HepG2 (cell line): ENCODE measurements at regions of chr16 and their contacts with region 1.

Region 1: DNA sequence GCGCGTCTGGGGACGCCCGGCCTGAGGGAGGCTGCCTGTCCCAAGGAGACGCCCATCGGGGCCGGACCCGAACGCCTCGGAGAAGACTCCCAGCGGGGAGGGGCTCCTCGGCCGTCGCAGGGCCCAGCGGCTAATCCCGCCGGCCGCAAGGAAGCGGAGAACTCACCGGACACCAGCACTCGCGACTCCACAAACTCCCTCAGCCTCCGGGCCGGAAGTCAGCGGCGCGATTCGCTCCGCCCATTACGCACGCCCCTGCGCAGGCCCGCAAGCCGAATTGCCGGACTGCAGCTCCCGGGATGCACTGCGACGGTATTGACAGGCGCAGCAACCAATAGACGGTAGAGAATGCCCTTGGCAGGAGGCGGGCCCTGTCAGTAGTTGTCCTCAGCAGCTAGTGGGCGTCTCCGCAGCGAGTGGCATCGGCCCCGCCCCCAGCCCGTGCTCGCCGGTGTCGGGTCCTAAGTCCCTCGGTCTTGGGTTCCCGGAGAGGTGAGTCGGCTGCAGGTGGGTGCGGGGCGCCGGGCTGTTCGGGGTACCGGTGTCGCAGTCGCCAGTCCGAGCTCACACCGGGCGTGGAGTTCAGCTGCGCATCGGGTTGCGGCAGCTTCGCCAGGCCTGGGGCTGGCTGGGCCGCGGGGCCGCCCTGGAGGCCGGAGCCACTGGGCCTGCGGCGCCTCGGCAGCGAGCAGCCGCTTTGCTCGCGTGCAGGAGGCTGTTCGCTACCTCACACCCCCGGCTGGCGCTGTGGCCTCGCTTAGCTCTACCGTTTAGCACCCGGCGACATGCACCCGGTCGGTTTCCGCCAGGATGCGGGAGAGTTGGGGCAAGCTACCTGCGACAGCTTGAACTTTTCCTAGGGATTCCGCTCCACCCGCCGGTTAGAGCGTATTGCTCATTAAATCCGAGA is at the starts of genes ZNF174 and ZSCAN32:
- DNase-seq: peak; percentile 98
- ATAC-seq: peak; percentile 96
- H3K4me3 ChIP-seq: peak within 1 kb of the TSS; percentile 90 to 94 (median 94)
- H3K27ac ChIP-seq: peak within 1 kb of the TSS; percentile 86
- H3K4me1 ChIP-seq: peaks cover 29% of the 10 kb centered on the region
- H3K27me3 ChIP-seq: no peaks in the 10 kb centered on the region; a peak in 1 of 5 replicates
- CTCF ChIP-seq: peak; percentile 18; the same call in 1 of the 2 replicates
- EP300 ChIP-seq: 0 out of 4 replicates have a peak, but pooled peaks of 1 of the 2 experiments have one; percentile 15
- POLR2A ChIP-seq: peak; percentile 81 to 92
- RAD21 ChIP-seq: peak; percentile 50
- total RNA-seq, gene ZNF174: 10.0 and 10.6 TPM in 2 replicates
- total RNA-seq, gene ZSCAN32: 10.7 and 11.7 TPM in 2 replicates

Region 2: DNA sequence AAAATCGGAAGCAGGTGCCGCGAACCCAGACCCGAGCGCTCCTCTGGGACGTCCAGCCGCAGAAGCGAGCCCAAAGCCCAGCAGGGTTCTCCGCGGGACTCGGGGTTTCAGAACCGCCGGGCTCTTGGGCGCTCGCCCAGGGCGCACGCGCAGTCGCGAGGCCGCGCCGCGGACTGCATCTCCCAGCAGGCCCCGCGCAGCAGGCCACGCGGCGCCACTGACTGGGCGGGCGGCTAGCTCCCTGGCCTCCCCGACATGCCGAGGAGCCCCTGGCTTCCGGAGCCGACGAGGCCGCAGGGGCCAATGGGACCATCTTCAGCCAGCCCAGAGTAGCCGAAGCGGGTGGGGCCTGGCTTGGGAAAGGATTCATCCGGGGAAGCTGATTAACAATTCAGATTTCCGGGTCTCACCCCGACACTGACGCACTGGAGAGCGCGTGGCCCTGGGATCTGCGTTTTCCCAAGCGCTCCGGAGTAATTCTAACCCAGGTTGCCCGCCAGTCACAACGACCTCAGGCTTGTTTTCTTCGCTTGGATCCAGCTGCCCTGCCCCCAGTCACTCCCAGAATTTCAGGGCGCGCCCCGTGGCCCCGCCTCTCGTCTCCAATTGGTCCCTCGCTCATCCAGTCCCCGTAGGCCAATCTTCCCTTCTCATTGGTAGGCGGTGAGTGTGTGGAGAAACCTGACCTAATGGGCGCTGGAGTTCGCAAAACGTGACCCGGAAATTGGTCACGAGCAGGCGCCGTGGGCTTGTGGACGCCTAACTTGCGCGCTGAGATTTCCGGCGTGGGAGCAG is 118.1 kb before region 1 on chr16 and contains the start of gene ZNF263:
- CTCF ChIA-PET with region 1: no interaction called
- POLR2A ChIA-PET with region 1: interaction called, 26 read pairs
- in situ Hi-C with region 1: no loop called
- intact Hi-C with region 1: loop called (anchors 1 kb)
- DNase-seq: peak; percentile 97
- ATAC-seq: peak; percentile 93
- H3K4me3 ChIP-seq: peak within 1 kb of the TSS; percentile 79 to 100 (median 99)
- H3K27ac ChIP-seq: peak within 1 kb of the TSS; percentile 99
- H3K4me1 ChIP-seq: peaks cover 45% of the 10 kb centered on the region
- H3K27me3 ChIP-seq: no peaks in the 10 kb centered on the region; a peak in 1 of 5 replicates
- CTCF ChIP-seq: peak; percentile 16; the same call in 1 of the 2 replicates
- EP300 ChIP-seq: peak in 1 of 2 experiments; percentile 29; a peak in 1 of 4 replicates
- POLR2A ChIP-seq: peak; percentile 68 to 89
- RAD21 ChIP-seq: peak; percentile 28
- total RNA-seq, gene ZNF263: 40.3 and 41.2 TPM in 2 replicates

Region 3: GRCh38 chr16:3364774-3365427 is 36.1 kb before region 1 on chr16:
- CTCF ChIA-PET with region 1: no interaction called
- POLR2A ChIA-PET with region 1: interaction called, 17 read pairs
- in situ Hi-C with region 1: no loop called
- intact Hi-C with region 1: no loop called
- DNase-seq: peak; percentile 94
- ATAC-seq: peak; percentile 87
- H3K4me3 ChIP-seq: peak overlapping the region; percentile 74 to 79 (median 75); a peak in 5 of 6 replicates
- H3K27ac ChIP-seq: peak overlapping the region; percentile 93
- H3K4me1 ChIP-seq: peaks cover 20% of the 10 kb centered on the region
- H3K27me3 ChIP-seq: peaks cover 0 to 13% of the 10 kb centered on the region in 2 experiments; a peak in 2 of 5 replicates
- CTCF ChIP-seq: no peak
- EP300 ChIP-seq: no peak
- POLR2A ChIP-seq: peak; percentile 65 to 84
- RAD21 ChIP-seq: no peak

Region 4: GRCh38 chr16:3383045-3383448 is 18.0 kb before region 1 on chr16:
- CTCF ChIA-PET with region 1: no interaction called
- POLR2A ChIA-PET with region 1: no interaction called
- in situ Hi-C with region 1: no loop called
- intact Hi-C with region 1: no loop called
- DNase-seq: no peak
- ATAC-seq: no peak
- H3K4me3 ChIP-seq: no peak overlapping the region
- H3K27ac ChIP-seq: no peak overlapping the region
- H3K4me1 ChIP-seq: peaks cover 3% of the 10 kb centered on the region; the same call in 1 of the 2 replicates
- H3K27me3 ChIP-seq: no peaks in the 10 kb centered on the region
- CTCF ChIP-seq: no peak
- EP300 ChIP-seq: no peak
- POLR2A ChIP-seq: no peak
- RAD21 ChIP-seq: no peak

Region 5: DNA sequence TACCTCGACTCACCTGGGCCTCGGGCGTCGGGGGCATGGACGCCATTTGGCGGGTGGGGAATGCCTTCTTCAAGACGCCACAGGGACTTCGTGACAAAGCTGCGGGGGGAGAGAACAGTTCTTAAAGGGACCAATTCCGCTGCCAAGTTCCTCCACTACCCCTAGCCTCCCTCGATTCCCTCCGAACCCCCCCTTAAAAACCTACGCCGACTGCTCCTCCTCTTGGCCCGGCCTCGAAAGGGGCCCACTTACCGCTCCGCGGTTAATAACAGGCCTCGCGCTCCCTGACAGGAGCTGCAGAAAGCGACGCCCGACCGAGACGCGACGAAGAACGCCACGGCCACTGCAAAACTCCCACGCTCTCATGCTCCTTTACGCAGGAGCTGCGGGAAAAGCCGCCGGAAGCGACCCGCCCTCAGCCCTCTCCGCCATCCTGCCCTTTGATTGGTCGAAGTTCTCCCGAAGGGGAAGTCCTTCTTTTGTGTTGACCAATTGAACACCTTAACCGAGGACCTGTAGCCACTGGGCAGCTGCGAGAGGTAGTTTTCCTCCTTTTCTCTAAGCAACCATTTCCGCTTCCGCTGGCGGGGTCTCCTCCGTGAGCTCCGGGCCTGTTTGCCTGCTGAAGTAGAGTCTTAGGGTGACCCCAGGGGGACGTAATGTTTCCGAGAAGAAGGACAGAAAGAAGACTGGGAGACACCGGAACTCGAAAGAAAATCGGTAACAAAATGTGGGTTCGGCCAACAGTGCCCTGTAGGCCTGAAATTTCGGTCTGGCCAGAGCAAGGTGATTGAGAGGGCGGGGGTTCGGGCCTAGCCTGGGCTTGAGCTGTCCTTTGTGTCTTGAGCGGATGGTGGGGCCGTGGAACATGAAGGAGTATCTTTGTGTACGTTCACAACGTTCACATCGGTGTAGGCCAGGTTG is 42.3 kb after region 1 on chr16 and contains the starts of genes NAA60 and ZNF597:
- CTCF ChIA-PET with region 1: no interaction called
- POLR2A ChIA-PET with region 1: interaction called, 33 read pairs
- in situ Hi-C with region 1: no loop called
- intact Hi-C with region 1: loop called (anchors 5 kb)
- DNase-seq: peak; percentile 93
- ATAC-seq: peak; percentile 94
- H3K4me3 ChIP-seq: peak within 1 kb of the TSS; percentile 66 to 76 (median 75)
- H3K27ac ChIP-seq: peak within 1 kb of the TSS; percentile 78
- H3K4me1 ChIP-seq: peaks cover 66% of the 10 kb centered on the region
- H3K27me3 ChIP-seq: no peaks in the 10 kb centered on the region; a peak in 1 of 5 replicates
- CTCF ChIP-seq: peak; percentile 2; the same call in 1 of the 2 replicates
- EP300 ChIP-seq: no peak
- POLR2A ChIP-seq: peak; percentile 42 to 69
- RAD21 ChIP-seq: no peak
- total RNA-seq, gene NAA60: 14.7 and 16.9 TPM in 2 replicates
- total RNA-seq, gene ZNF597: 2.4 and 3.8 TPM in 2 replicates

Region 6: DNA sequence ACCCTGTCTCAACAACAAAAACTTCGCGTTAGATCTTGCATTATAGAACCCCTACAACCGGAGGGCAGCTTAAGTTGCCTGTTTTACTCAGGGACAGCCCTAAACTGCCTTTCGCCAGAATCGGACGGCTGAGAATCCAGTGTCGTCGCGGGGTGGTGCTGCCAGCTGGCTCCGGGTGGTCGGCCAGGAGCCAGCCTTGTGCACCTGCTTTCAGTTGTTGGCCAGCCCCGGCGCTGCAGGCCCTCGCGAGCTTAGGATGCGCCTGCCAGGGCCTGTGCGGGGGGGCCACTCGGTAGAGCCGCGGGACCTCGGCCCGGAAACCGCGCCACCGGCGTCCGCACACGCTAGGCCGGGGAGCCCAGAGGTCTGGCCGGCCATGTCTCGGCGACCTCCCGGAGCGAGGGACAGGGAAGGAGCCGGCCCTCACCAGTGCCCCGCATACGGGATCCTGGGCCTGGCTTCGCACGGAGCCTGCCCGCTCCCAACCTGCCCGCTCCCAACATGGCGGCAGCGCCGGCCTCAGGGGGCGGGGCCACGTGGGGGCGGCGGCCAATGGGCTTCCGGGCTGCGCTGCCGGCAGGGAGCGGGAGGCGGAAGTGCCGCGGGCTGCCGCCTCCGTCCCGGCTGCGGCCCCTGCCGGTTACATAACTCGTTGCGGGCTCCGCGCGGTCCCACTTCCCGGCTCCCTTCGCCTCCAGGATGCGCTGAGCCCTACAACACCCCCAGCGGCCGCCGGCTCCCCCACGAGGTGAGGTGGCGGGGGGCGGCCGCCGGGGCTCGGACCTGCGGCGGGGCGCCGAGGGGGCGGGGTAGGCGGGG is 56.6 kb after region 1 on chr16:
- CTCF ChIA-PET with region 1: no interaction called
- POLR2A ChIA-PET with region 1: interaction called, 16 read pairs
- in situ Hi-C with region 1: no loop called
- intact Hi-C with region 1: loop called (anchors 1 kb)
- DNase-seq: peak; percentile 78
- ATAC-seq: peak; percentile 83
- H3K4me3 ChIP-seq: peak overlapping the region; percentile 74 to 93 (median 92)
- H3K27ac ChIP-seq: peak overlapping the region; percentile 91
- H3K4me1 ChIP-seq: peaks cover 70% of the 10 kb centered on the region
- H3K27me3 ChIP-seq: no peaks in the 10 kb centered on the region; a peak in 1 of 5 replicates
- CTCF ChIP-seq: peak; percentile 41; the same call in 1 of the 2 replicates
- EP300 ChIP-seq: 0 out of 4 replicates have a peak, but pooled peaks of 1 of the 2 experiments have one; percentile 9
- POLR2A ChIP-seq: peak; percentile 89 to 92
- RAD21 ChIP-seq: peak; percentile 66

Region 7: DNA sequence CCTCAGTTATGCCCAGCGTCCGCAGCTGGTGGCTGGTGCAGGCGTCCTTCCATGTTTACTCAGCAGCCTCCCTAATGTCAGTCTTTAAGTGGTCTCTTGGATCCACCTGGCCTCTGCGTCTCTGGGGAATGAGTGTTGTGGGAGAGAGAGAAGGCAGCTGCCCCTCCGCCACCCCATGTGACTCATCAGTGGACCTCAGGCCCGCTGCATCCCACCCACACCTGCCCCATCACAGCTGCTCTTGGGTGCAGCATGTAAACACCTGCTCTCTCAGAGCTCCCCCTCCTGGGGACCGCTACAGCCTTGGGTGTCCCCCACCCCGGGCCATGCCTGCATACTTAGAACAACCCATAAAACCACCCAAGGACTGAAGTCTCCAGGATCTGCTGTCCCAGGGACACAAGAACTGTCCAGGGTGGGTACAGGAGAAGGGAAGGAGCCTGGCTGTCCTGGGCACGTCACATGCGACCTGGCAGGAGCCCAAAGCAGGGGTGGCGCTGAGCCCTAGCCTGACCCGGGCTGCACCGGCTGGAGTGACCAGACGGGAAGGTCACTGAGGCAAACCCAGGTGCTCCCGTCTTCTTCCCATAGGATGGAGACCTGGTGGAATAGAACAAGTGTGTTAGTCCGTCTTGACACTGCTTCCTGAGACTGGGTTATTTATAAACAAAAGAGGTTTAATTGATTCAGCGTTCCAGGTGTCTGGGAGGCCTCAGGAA is 90.0 kb after region 1 on chr16:
- CTCF ChIA-PET with region 1: no interaction called
- POLR2A ChIA-PET with region 1: interaction called, 6 read pairs
- in situ Hi-C with region 1: no loop called
- intact Hi-C with region 1: loop called (anchors 10 kb)
- DNase-seq: peak; percentile 40
- ATAC-seq: peak; percentile 64
- H3K4me3 ChIP-seq: peak overlapping the region in 1 of 3 experiments; percentile 52; a peak in 2 of 6 replicates
- H3K27ac ChIP-seq: no peak overlapping the region
- H3K4me1 ChIP-seq: peaks cover 28% of the 10 kb centered on the region
- H3K27me3 ChIP-seq: peaks cover 3 to 4% of the 10 kb centered on the region in 2 experiments; a peak in 2 of 5 replicates
- CTCF ChIP-seq: peak; percentile 82
- EP300 ChIP-seq: no peak
- POLR2A ChIP-seq: no peak
- RAD21 ChIP-seq: 0 out of 2 replicates have a peak, but pooled peaks have one; percentile 25